T-cell (primary cell): ENCODE measurements at regions of chr1 and their contacts with region 1.

Region 1: GRCh38 chr1:40404670-40405462 is 31.3 kb downstream of the SMAP2 start:
- DNase-seq: peak in 21 of 35 experiments; percentile 18 to 87 (median 48)
- ATAC-seq: peak; percentile 62 to 82 (median 70)
- H3K4me3 ChIP-seq: no peak overlapping the region
- H3K4me3 Mint-ChIP-seq: peak overlapping the region; percentile 44 to 57 (median 49)
- H3K27ac ChIP-seq: peak overlapping the region; percentile 87
- H3K27ac Mint-ChIP-seq: peak overlapping the region; percentile 75 to 88
- H3K4me1 ChIP-seq: peaks cover 30 to 44% of the 10 kb centered on the region in 2 experiments
- H3K4me1 Mint-ChIP-seq: peaks cover 76 to 82% (median 79%) of the 10 kb centered on the region in 3 donors
- H3K27me3 ChIP-seq: no peaks in the 10 kb centered on the region
- H3K27me3 Mint-ChIP-seq: no peaks in the 10 kb centered on the region

Region 2: GRCh38 chr1:40392221-40392620 is 12.6 kb before region 1 on chr1:
- CTCF ChIA-PET with region 1: interaction called, 3 to 36 read pairs
- POLR2A ChIA-PET with region 1: interaction called, 18 to 32 read pairs
- DNase-seq: no peak
- ATAC-seq: no peak
- H3K4me3 ChIP-seq: no peak overlapping the region
- H3K4me3 Mint-ChIP-seq: peak overlapping the region; percentile 26 to 93 (median 35)
- H3K27ac ChIP-seq: peak overlapping the region; percentile 96
- H3K27ac Mint-ChIP-seq: peak overlapping the region; percentile 98 to 99
- H3K4me1 ChIP-seq: peaks cover 81 to 84% of the 10 kb centered on the region in 2 experiments
- H3K4me1 Mint-ChIP-seq: peaks cover 92 to 95% (median 94%) of the 10 kb centered on the region in 3 donors
- H3K27me3 ChIP-seq: no peaks in the 10 kb centered on the region
- H3K27me3 Mint-ChIP-seq: no peaks in the 10 kb centered on the region

Region 3: GRCh38 chr1:40519517-40519916 is 114.7 kb after region 1 on chr1:
- CTCF ChIA-PET with region 1: no interaction called
- POLR2A ChIA-PET with region 1: no interaction called
- DNase-seq: no peak
- ATAC-seq: no peak
- H3K4me3 ChIP-seq: no peak overlapping the region
- H3K4me3 Mint-ChIP-seq: no peak overlapping the region
- H3K27ac ChIP-seq: no peak overlapping the region
- H3K27ac Mint-ChIP-seq: no peak overlapping the region
- H3K4me1 ChIP-seq: no peaks in the 10 kb centered on the region
- H3K4me1 Mint-ChIP-seq: no peaks in the 10 kb centered on the region
- H3K27me3 ChIP-seq: peaks cover 0 to 5% of the 10 kb centered on the region in 2 experiments
- H3K27me3 Mint-ChIP-seq: peaks cover 5 to 10% of the 10 kb centered on the region in 2 donors

Region 4: GRCh38 chr1:40840526-40841323 is 435.9 kb after region 1 on chr1:
- CTCF ChIA-PET with region 1: no interaction called
- POLR2A ChIA-PET with region 1: no interaction called
- DNase-seq: peak in 10 of 35 experiments; percentile 11 to 43 (median 24)
- ATAC-seq: peak; percentile 75 to 92 (median 78)
- H3K4me3 ChIP-seq: peak overlapping the region in 1 of 2 donors; percentile 11
- H3K4me3 Mint-ChIP-seq: peak overlapping the region in 2 of 3 donors; percentile 23 to 64
- H3K27ac ChIP-seq: no peak overlapping the region
- H3K27ac Mint-ChIP-seq: peak overlapping the region; percentile 23 to 75
- H3K4me1 ChIP-seq: peaks cover 13 to 22% of the 10 kb centered on the region in 2 experiments
- H3K4me1 Mint-ChIP-seq: peaks cover 27 to 42% (median 37%) of the 10 kb centered on the region in 3 donors
- H3K27me3 ChIP-seq: peaks cover 0 to 11% of the 10 kb centered on the region in 2 experiments
- H3K27me3 Mint-ChIP-seq: no peaks in the 10 kb centered on the region